GM12878 (cell line): ENCODE measurements at regions of chr1 and their contacts with region 1.

Region 1: DNA sequence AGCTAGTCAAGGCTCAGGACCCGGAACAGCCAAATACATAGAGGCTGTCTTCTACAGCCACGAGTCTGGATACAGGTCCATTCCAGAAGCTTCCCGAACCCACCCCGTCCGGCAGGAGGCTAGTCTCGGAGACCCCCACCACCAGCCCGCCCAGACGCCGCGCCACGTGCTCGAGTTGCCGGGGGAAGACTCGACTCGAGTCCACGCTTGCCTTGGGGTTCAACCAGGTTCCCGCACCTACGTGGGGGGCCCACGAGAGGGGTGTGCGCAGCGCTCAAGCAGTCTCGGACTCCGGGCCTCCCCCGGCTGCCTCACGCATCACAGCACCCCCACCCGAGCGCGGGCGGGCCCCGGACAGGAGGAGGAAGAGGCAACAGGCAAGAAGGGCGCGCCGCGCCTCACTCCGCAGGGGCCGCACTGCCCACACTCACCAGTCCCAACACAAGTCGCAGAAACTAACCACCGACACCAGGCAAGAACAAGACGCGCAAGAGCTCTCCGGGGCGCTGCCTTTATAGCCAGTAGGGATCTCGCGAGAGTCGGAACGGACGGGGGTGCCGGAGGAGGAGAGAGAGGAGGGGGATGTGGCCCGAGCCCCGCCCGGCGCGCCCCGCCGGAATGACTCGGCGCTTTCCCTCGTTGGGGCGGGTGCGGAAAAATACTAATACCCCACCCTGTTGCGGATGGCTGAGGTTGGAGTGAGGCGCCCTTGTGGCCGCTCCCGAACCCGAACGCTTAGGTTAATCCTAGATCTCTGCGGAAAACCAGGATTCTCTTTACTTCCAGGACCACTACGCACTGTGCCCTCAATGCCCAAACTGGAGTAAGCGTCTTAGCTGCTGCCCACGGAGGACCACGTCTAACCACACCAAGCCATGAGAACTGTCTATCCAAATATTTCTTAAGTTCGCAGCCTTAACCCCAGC is at the start of gene PRDX1:
- DNase-seq: peak; percentile 93
- ATAC-seq: peak; percentile 91
- H3K4me3 ChIP-seq: peak within 1 kb of the TSS; percentile 96
- H3K27ac ChIP-seq: peak within 1 kb of the TSS; percentile 89
- H3K4me1 ChIP-seq: peaks cover 10% of the 10 kb centered on the region; the same call in 1 of the 2 replicates
- H3K27me3 ChIP-seq: no peaks in the 10 kb centered on the region
- CTCF ChIP-seq: no peak
- EP300 ChIP-seq: 0 out of 4 replicates have a peak, but pooled peaks of 1 of the 2 experiments have one; percentile 4
- POLR2A ChIP-seq: peak; percentile 100
- RAD21 ChIP-seq: 0 out of 2 replicates have a peak, but pooled peaks have one; percentile 13
- polyA plus RNA-seq, gene PRDX1: 1,264 to 1,775 TPM

Region 2: GRCh38 chr1:45499415-45499769 is 22.3 kb before region 1 on chr1:
- CTCF ChIA-PET with region 1: interaction called, 5 read pairs
- POLR2A ChIA-PET with region 1: interaction called, 19 read pairs
- RAD21 ChIA-PET with region 1: interaction called, 42 read pairs
- SMC1A ChIA-PET with region 1: interaction called, 24 read pairs
- in situ Hi-C with region 1: no loop called
- intact Hi-C with region 1: no loop called
- DNase-seq: no peak
- ATAC-seq: no peak; the same call in 2 of the 3 replicates
- H3K4me3 ChIP-seq: peak overlapping the region; percentile 93
- H3K27ac ChIP-seq: peak overlapping the region; percentile 54
- H3K4me1 ChIP-seq: peaks cover 15% of the 10 kb centered on the region
- H3K27me3 ChIP-seq: no peaks in the 10 kb centered on the region
- CTCF ChIP-seq: no peak
- EP300 ChIP-seq: no peak
- POLR2A ChIP-seq: no peak
- RAD21 ChIP-seq: no peak

Region 3: DNA sequence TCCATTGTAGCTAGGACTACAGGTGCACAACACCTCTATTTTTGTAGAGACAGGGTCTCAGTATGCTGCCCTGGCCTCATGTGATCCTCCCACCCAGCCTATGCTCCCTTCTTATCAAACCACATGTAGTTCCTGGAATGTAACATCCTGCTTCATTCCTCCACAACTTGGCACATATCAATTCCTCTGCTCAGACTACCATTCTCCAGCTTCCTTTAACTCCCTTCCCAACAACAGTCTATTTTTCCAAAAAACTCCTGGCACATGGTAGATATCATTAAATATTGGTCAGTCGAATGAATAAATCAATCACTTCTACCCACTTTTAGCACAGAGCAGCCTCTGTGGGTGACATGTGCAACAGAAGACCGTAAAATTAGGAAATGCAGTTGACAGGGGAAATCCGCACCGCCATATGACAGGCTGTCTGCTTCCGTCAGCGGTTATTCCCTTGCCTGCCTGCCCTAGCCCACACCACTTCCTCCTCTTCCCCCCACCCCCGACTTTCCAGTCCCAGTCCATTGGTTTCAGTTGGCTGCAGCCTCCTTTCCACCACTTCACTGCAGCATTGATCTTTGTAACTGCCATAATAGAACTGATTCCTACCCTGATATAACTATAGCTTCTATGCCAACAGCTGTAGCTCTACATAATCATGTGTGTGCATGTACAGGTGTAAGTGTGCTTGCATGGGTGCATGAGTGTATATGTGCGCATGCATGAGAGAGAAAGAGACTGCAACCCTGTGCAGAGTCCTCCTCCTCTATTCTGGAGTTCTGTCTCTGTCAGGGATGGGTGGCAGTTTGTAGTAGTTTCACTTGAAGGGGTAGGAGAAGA is 22.1 kb after region 1 on chr1:
- CTCF ChIA-PET with region 1: interaction called, 9 read pairs
- POLR2A ChIA-PET with region 1: interaction called, 118 read pairs
- RAD21 ChIA-PET with region 1: interaction called, 40 read pairs
- SMC1A ChIA-PET with region 1: interaction called, 80 read pairs
- in situ Hi-C with region 1: no loop called
- intact Hi-C with region 1: loop called (anchors 2 kb)
- DNase-seq: peak; percentile 76
- ATAC-seq: peak; percentile 79
- H3K4me3 ChIP-seq: peak overlapping the region; percentile 25; the same call in 1 of the 2 replicates
- H3K27ac ChIP-seq: peak overlapping the region; percentile 78
- H3K4me1 ChIP-seq: peaks cover 30% of the 10 kb centered on the region
- H3K27me3 ChIP-seq: no peaks in the 10 kb centered on the region
- CTCF ChIP-seq: no peak
- EP300 ChIP-seq: peak; percentile 84 to 93
- POLR2A ChIP-seq: 0 out of 2 replicates have a peak, but pooled peaks have one; percentile 29
- RAD21 ChIP-seq: no peak

Region 4: GRCh38 chr1:45557422-45557944 is 35.8 kb after region 1 on chr1:
- CTCF ChIA-PET with region 1: interaction called, 13 read pairs
- POLR2A ChIA-PET with region 1: interaction called, 105 read pairs
- RAD21 ChIA-PET with region 1: interaction called, 3 read pairs
- SMC1A ChIA-PET with region 1: interaction called, 8 read pairs
- in situ Hi-C with region 1: no loop called
- intact Hi-C with region 1: no loop called
- DNase-seq: no peak
- ATAC-seq: peak; percentile 65
- H3K4me3 ChIP-seq: no peak overlapping the region
- H3K27ac ChIP-seq: peak overlapping the region; percentile 69
- H3K4me1 ChIP-seq: peaks cover 7% of the 10 kb centered on the region
- H3K27me3 ChIP-seq: no peaks in the 10 kb centered on the region
- CTCF ChIP-seq: no peak
- EP300 ChIP-seq: no peak
- POLR2A ChIP-seq: no peak
- RAD21 ChIP-seq: no peak

Region 5: GRCh38 chr1:45583264-45583665 is 61.6 kb after region 1 on chr1:
- CTCF ChIA-PET with region 1: interaction called, 8 read pairs
- POLR2A ChIA-PET with region 1: interaction called, 28 read pairs
- RAD21 ChIA-PET with region 1: interaction called, 8 read pairs
- SMC1A ChIA-PET with region 1: interaction called, 35 read pairs
- in situ Hi-C with region 1: no loop called
- intact Hi-C with region 1: loop called (anchors 2 kb)
- DNase-seq: peak; percentile 98
- ATAC-seq: peak; percentile 89
- H3K4me3 ChIP-seq: peak overlapping the region; percentile 94
- H3K27ac ChIP-seq: peak overlapping the region; percentile 97
- H3K4me1 ChIP-seq: peaks cover 12% of the 10 kb centered on the region; the same call in 1 of the 2 replicates
- H3K27me3 ChIP-seq: no peaks in the 10 kb centered on the region
- CTCF ChIP-seq: no peak
- EP300 ChIP-seq: no peak
- POLR2A ChIP-seq: no peak
- RAD21 ChIP-seq: no peak